A673 (cell line): ENCODE measurements at regions of chr18 and their contacts with region 1.

Region 1: DNA sequence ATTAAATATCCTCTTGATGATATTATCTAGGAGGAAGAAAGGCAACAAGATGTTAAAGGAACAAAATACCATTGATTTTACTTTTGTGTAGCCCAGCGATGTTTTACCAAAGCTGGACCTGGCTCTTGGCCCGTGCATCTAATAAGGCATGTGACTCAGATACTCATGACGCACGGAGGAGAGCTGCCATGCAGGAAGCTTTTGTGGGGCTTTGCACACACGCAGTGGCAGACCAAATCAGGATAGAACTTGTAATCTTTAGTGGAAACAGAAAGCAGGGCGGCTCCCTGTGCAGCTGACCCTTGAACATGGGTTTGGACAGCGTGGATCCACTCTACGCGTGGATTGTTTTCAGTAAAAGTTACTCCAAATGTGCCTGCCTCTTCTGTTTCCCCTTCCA is 190.0 kb downstream of the NAPG start:
- DNase-seq: peak; percentile 25
- H3K4me3 ChIP-seq: no peak overlapping the region
- H3K27ac ChIP-seq: no peak overlapping the region
- H3K4me1 ChIP-seq: no peaks in the 10 kb centered on the region
- H3K27me3 ChIP-seq: peaks cover 13% of the 10 kb centered on the region
- CTCF ChIP-seq: no peak

Region 2: DNA sequence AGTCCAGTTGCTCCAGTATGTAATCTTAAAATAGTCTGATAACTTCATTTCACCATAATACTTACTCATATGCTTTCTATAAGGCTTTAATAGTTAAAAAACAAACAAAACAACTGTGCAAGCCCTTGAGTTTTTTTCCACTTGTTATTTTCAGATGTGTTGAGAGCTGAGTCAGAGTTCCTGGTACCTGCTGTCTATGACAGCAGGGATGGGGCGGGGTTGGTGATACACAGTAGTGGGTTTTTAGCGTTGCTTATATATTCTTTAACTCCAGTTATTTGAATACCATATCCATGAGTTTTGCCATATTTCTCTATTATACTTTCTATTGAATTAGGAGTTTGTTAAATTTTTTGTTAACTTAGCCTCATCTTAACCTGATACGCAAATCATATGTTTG is 184.9 kb before region 1 on chr18:
- CTCF ChIA-PET with region 1: no interaction called
- POLR2A ChIA-PET with region 1: no interaction called
- intact Hi-C with region 1: no loop called
- DNase-seq: no peak
- H3K4me3 ChIP-seq: no peak overlapping the region
- H3K27ac ChIP-seq: no peak overlapping the region
- H3K4me1 ChIP-seq: peaks cover 19% of the 10 kb centered on the region
- H3K27me3 ChIP-seq: no peaks in the 10 kb centered on the region
- CTCF ChIP-seq: no peak

Region 3: GRCh38 chr18:10560450-10561045 is 155.2 kb before region 1 on chr18:
- CTCF ChIA-PET with region 1: no interaction called
- POLR2A ChIA-PET with region 1: no interaction called
- intact Hi-C with region 1: loop called (anchors 10 kb)
- DNase-seq: peak; percentile 86
- H3K4me3 ChIP-seq: peak overlapping the region; percentile 21
- H3K27ac ChIP-seq: peak overlapping the region; percentile 35
- H3K4me1 ChIP-seq: peaks cover 11% of the 10 kb centered on the region
- H3K27me3 ChIP-seq: no peaks in the 10 kb centered on the region
- CTCF ChIP-seq: peak; percentile 87

Region 4: GRCh38 chr18:10739152-10739551 is 23.4 kb after region 1 on chr18:
- CTCF ChIA-PET with region 1: no interaction called
- POLR2A ChIA-PET with region 1: no interaction called
- intact Hi-C with region 1: no loop called
- DNase-seq: peak; percentile 17
- H3K4me3 ChIP-seq: no peak overlapping the region
- H3K27ac ChIP-seq: no peak overlapping the region
- H3K4me1 ChIP-seq: peaks cover 8% of the 10 kb centered on the region
- H3K27me3 ChIP-seq: peaks cover 8% of the 10 kb centered on the region
- CTCF ChIP-seq: no peak